Heart right ventricle (tissue), 16 donors: ENCODE measurements at regions of chr6 and their contacts with region 1.

Region 1: GRCh38 chr6:138752017-138752416 is 21.6 kb upstream of the CCDC28A start:
- DNase-seq: no peak
- ATAC-seq: no peak
- H3K4me3 ChIP-seq: no peak overlapping the region
- H3K27ac ChIP-seq: no peak overlapping the region
- H3K4me1 ChIP-seq: peaks cover 0 to under 1% (median 0%) of the 10 kb centered on the region in 9 donors
- H3K27me3 ChIP-seq: no peaks in the 10 kb centered on the region
- CTCF ChIP-seq: no peak

Region 2: DNA sequence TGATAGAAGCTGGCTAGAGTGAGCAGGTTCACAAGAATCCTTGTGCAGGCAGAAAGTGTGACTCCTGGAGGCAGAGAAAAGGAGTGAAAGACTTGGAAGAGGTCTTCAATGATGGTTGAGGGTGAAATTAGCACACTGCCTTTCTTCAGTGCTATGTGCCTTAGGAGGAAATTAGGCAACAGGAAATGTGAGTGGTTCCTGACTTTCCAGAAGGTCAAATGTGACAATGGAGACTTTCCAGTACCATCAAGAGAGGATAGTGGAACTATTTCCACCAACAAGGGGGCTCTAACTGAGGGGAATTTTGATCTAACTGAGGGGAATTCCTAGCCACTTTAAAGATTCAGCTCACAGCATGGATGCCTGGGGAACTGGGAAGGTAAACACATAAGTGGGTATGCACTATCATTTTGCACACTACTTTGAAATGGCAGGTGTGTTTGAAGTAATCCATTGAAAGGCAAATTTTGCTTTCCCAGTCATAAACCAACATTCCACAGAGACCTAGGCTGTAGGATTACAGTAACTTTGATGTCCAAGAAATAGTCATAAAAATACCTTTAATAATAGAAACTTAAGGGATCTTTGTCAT is 734.8 kb before region 1 on chr6:
- intact Hi-C with region 1: loop called in 1 of 10 experiments (anchors 5 kb)
- DNase-seq: no peak
- ATAC-seq: no peak
- H3K4me3 ChIP-seq: no peak overlapping the region
- H3K27ac ChIP-seq: no peak overlapping the region
- H3K4me1 ChIP-seq: no peaks in the 10 kb centered on the region
- H3K27me3 ChIP-seq: no peaks in the 10 kb centered on the region
- CTCF ChIP-seq: no peak

Region 3: DNA sequence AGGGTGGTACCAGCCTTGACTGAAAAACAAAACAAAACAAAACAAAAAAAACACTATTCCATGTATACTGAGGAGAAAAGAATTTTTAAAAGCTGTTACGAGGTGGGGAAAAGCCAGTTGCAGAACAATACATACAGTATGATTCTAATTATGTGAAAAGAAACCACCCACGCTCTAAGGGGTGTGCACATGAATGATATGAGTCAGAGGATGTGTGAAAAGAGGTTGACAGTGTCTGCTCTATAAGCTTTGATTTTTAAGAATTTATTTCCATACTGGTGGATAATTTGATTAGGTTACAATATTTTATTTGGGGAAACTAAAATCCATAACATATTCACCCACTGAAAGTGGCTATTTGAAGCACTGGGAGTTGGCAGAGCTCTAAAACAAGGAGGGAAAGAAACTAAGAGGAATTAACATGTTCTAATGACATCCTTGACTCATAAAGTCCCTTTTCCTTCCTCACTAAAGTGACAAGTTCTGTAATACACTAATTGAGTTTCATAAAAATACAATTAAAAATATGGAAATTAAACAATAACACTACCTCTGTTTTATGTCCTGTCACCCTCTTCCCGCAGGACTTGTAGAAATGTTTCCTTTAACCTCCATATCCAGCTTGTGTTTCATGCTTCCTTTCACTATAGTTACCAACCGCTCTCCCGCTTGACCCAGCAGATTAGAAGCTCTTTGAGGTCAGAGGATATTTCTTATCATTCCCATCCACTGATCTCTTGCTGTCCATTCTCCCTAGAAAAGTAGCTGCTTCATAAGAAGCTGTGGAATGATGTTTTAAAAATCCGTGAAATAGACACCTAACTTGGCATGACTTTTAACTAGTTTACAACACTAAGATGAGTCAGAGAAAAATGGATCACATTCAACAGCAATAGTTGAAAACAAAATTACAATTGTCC is 97.0 kb before region 1 on chr6:
- intact Hi-C with region 1: no loop called
- DNase-seq: no peak
- ATAC-seq: peak in 3 of 8 donors; percentile 53 to 72 (median 69)
- H3K4me3 ChIP-seq: no peak overlapping the region
- H3K27ac ChIP-seq: no peak overlapping the region
- H3K4me1 ChIP-seq: peaks cover 0 to 25% (median 0%) of the 10 kb centered on the region in 9 donors
- H3K27me3 ChIP-seq: no peaks in the 10 kb centered on the region
- CTCF ChIP-seq: no peak